ENCODE measurements at regions of chr7 and their contacts with region 1.

Region 1: DNA sequence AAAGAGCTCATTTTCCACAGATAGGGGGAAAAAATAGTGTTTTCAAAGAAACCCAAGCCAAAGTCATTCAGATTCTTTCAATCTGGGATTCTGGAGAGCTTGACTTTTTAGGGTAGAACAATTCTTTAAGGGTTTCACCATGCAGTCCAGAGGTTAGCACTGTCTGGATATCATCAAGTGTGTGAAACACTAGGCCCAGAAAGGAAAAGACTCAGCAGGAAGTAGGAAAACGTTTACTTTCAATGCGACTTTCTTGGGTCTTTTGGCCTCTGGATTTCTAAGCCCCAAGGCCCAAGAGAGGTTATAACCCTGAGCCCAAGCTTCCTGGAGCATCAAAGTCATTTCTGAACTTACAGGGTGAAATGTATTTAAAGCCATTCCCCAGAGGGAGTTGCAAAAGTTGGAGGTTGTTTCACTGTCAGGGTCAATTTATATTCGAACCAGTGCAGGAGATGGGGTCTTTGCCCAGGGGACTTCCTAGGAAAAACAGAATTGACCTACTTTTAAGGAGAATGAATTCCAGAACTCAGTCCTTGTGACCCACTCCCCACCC is 158.0 kb downstream of the C7orf25 start:
- DNase-seq: peak in 1 of 2 donors; percentile 57
- ATAC-seq: peak in 7 of 8 donors; percentile 56 to 93 (median 68)
- H3K4me3 ChIP-seq: no peak overlapping the region
- H3K27ac ChIP-seq: peak overlapping the region in 3 of 10 donors; percentile 0 to 48 (median 41)
- H3K4me1 ChIP-seq: peaks cover 0 to 13% (median 0%) of the 10 kb centered on the region in 9 donors
- H3K27me3 ChIP-seq: no peaks in the 10 kb centered on the region
- CTCF ChIP-seq: no peak

Region 2: GRCh38 chr7:42735081-42735480 is 18.8 kb before region 1 on chr7:
- intact Hi-C with region 1: loop called in 1 of 10 experiments (anchors 1 kb)
- DNase-seq: no peak
- ATAC-seq: no peak
- H3K4me3 ChIP-seq: no peak overlapping the region
- H3K27ac ChIP-seq: no peak overlapping the region
- H3K4me1 ChIP-seq: peaks cover 0 to 9% (median 0%) of the 10 kb centered on the region in 9 donors
- H3K27me3 ChIP-seq: no peaks in the 10 kb centered on the region
- CTCF ChIP-seq: no peak

Region 3: DNA sequence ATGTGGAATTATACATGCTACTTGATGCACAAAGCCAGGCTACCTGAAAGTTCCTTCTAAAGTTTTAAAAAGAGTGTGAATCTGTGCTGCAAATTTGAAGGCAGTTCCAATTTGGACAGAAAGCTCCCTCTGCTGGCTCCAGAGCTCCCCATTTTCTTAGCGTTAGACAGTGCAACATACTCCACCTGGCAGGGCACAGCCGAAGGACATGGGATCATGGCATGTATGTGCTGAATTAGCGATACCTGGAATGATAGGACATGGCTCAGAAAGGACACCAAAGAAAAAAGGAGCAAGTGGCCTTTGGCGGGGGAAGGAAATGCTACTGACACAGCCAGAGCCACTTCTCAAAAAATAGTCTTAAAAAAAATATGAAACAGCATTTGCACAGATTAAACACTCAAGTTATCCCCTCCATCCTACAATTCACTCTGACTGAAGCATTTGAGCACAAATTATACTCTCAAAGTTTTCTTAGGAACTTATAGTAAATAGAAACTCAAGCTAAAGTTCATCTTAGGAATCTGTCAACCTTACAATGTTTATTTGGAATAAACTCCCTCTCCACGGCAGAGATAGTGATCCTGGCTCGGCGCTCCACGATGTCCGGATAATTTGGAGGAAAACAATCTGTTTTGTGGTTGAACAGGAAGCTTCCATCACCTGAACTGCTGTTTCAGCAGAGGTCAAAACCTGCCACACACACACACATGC is 78.0 kb after region 1 on chr7:
- intact Hi-C with region 1: loop called in 1 of 10 experiments (anchors 10 kb)
- DNase-seq: peak; percentile 14 to 49
- ATAC-seq: peak; percentile 59 to 85 (median 72)
- H3K4me3 ChIP-seq: no peak overlapping the region
- H3K27ac ChIP-seq: no peak overlapping the region
- H3K4me1 ChIP-seq: peaks cover 0 to 14% (median 0%) of the 10 kb centered on the region in 9 donors
- H3K27me3 ChIP-seq: no peaks in the 10 kb centered on the region
- CTCF ChIP-seq: peak; percentile 44 to 79 (median 61)

Region 4: DNA sequence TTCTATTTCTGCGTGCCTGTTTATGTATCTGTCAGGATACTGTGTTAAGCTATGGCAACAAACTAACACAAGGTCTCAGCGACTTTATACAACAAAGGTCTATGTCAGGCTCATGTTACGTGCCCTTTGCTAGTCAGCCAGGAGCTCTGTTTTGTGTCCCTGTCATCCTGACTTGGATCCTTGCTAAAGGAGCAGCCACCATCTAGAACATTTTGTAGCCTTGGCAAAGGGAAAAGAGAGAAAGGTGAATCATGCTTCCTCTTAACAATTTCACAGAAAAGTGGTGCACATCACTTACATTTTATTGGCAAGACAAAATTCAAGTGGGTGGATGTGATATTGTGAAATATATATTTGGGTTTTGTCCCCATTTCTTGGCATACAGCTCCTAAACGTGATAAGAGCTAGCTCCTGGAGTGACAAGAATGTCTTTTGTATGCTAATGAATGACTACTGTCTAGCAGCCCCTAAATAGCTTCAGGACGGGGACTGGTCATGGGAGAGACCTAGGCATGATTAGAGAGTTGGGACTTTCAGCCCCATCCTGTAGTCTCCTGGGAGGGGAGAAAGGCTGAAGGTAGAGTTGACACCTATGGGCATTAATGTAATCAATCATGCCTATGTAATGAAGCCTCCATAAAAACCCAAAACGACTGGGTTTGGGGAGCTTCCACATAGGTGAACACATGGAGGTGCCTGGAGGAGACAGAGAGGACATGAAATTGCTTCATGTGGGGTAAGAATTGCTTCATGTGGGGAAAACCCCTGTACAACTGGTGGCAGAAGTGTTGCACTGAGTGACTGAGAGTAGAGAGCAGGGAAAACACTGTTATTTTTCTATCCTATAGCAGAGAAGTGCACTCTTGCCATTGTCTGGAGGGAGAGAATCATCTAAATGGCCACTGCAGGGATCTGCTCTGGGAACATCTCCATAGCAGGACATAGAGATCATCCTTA is 211.2 kb after region 1 on chr7:
- intact Hi-C with region 1: no loop called
- DNase-seq: peak in 1 of 2 donors; percentile 49
- ATAC-seq: peak; percentile 72 to 98 (median 94)
- H3K4me3 ChIP-seq: no peak overlapping the region
- H3K27ac ChIP-seq: peak overlapping the region in 9 of 10 donors; percentile 59 to 78 (median 73)
- H3K4me1 ChIP-seq: peaks cover 0 to 20% (median 3%) of the 10 kb centered on the region in 9 donors
- H3K27me3 ChIP-seq: peaks cover 0 to 6% (median 0%) of the 10 kb centered on the region in 7 donors
- CTCF ChIP-seq: no peak

Region 5: DNA sequence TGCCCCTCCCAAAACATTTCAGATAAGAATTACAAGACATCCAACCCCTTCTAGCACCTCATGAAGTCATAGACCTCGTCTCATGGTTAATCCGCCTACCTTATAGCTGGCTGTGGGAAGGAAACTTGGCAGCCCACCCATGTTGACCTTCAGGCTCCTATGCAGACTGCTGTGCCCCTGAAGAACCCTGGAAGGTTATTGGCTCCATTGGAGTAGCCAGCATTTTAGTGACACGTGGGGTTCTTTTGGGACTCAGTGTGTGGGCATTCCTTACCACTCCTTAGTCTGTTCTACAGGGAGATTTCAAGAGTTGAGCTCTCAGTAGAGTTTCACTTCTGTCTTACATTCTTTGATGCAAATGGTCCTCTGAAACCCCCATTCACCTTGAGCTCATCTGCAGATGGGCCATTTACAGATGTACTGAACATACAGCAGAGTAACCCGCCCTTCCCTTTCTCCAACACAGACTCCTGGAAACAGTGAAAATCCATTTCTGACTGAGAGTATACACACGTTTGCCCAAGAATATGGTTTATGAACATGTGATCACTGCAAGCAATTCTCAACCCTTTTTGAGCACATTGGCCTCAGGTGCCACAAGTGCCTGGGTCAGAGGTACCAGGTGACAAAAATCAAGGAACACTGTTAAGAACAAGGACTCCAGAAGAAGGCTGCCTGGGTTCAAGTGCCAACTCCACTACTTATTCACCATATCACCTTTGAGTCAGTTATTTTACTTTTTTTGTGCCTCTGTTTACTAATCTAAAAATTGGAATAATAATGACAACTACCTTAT is 304.6 kb after region 1 on chr7:
- intact Hi-C with region 1: no loop called
- DNase-seq: no peak
- ATAC-seq: no peak
- H3K4me3 ChIP-seq: peak overlapping the region in 2 of 10 donors; percentile 23 to 38
- H3K27ac ChIP-seq: no peak overlapping the region
- H3K4me1 ChIP-seq: no peaks in the 10 kb centered on the region
- H3K27me3 ChIP-seq: peaks cover 0 to 11% (median 0%) of the 10 kb centered on the region in 7 donors
- CTCF ChIP-seq: no peak

Measured in heart right ventricle (tissue), 16 donors.